ENCODE measurements at regions of chr1 and their contacts with region 1.

Region 1: GRCh38 chr1:185720633-185721272 is 13.4 kb upstream of the HMCN1 start:
- DNase-seq: peak; percentile 76
- H3K4me3 ChIP-seq: no peak overlapping the region
- H3K27ac ChIP-seq: no peak overlapping the region
- H3K4me1 ChIP-seq: peaks cover 3% of the 10 kb centered on the region
- H3K27me3 ChIP-seq: no peaks in the 10 kb centered on the region
- CTCF ChIP-seq: peak; percentile 31 to 32
- POLR2A ChIP-seq: no peak

Region 2: GRCh38 chr1:185541871-185542301 is 178.9 kb before region 1 on chr1:
- CTCF ChIA-PET with region 1: no interaction called
- POLR2A ChIA-PET with region 1: no interaction called
- dilution Hi-C with region 1: no loop called
- intact Hi-C with region 1: no loop called
- DNase-seq: no peak
- H3K4me3 ChIP-seq: no peak overlapping the region
- H3K27ac ChIP-seq: no peak overlapping the region
- H3K4me1 ChIP-seq: no peaks in the 10 kb centered on the region
- H3K27me3 ChIP-seq: no peaks in the 10 kb centered on the region
- CTCF ChIP-seq: no peak
- POLR2A ChIP-seq: no peak

Region 3: DNA sequence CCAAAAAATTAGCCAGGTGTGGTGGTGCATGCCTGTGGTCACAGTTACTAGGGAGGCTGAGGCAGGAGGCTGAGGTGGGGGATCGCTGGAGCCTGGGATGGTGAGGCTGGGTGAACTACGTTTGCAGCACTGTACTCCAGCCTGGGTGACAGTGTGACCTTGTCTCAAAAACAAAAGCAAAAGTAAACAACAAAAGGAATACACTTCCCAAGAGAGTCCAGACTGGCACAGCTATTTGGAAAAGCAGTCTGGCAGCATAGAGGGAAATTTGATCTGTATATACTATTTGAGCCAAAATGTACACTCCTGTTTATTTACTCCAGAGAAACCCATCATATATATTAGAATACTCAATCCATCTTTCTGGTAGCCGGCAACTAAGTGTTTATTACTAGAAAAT is 93.6 kb before region 1 on chr1:
- CTCF ChIA-PET with region 1: no interaction called
- POLR2A ChIA-PET with region 1: no interaction called
- dilution Hi-C with region 1: no loop called
- intact Hi-C with region 1: no loop called
- DNase-seq: no peak
- H3K4me3 ChIP-seq: no peak overlapping the region
- H3K27ac ChIP-seq: no peak overlapping the region
- H3K4me1 ChIP-seq: no peaks in the 10 kb centered on the region
- H3K27me3 ChIP-seq: no peaks in the 10 kb centered on the region
- CTCF ChIP-seq: no peak
- POLR2A ChIP-seq: no peak

Region 4: GRCh38 chr1:185652348-185652747 is 68.4 kb before region 1 on chr1:
- CTCF ChIA-PET with region 1: interaction called, 11 read pairs
- POLR2A ChIA-PET with region 1: no interaction called
- dilution Hi-C with region 1: no loop called
- intact Hi-C with region 1: no loop called
- DNase-seq: no peak
- H3K4me3 ChIP-seq: no peak overlapping the region
- H3K27ac ChIP-seq: no peak overlapping the region
- H3K4me1 ChIP-seq: peaks cover 2% of the 10 kb centered on the region
- H3K27me3 ChIP-seq: no peaks in the 10 kb centered on the region
- CTCF ChIP-seq: peak; percentile 12 to 17
- POLR2A ChIP-seq: no peak

Region 5: GRCh38 chr1:185813401-185813979 is 92.7 kb after region 1 on chr1:
- CTCF ChIA-PET with region 1: interaction called, 69 read pairs
- POLR2A ChIA-PET with region 1: no interaction called
- dilution Hi-C with region 1: no loop called
- intact Hi-C with region 1: loop called (anchors 2 kb)
- DNase-seq: peak; percentile 80
- H3K4me3 ChIP-seq: no peak overlapping the region
- H3K27ac ChIP-seq: no peak overlapping the region
- H3K4me1 ChIP-seq: no peaks in the 10 kb centered on the region
- H3K27me3 ChIP-seq: no peaks in the 10 kb centered on the region
- CTCF ChIP-seq: peak; percentile 26 to 40
- POLR2A ChIP-seq: no peak

Region 6: DNA sequence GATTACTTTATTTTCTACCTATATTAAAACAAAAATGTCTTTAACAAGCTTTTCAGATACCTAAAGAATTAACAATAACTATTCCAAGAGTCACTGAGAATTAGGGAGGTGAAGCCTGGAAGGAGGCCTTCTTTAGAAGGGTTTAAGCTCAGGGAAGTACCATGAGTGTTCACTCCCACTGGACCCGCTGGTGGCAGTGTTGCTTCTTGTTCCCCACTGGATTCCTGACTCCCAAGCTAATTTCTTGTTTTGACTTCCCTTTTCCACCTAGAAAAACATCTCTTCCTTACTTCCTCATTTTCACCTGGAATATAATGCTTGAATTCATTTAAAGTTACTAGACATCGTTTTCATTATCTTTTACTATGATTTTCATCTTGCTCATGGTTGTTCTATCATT is 277.6 kb after region 1 on chr1:
- CTCF ChIA-PET with region 1: interaction called, 14 read pairs
- POLR2A ChIA-PET with region 1: no interaction called
- dilution Hi-C with region 1: no loop called
- intact Hi-C with region 1: no loop called
- DNase-seq: no peak
- H3K4me3 ChIP-seq: no peak overlapping the region
- H3K27ac ChIP-seq: no peak overlapping the region
- H3K4me1 ChIP-seq: no peaks in the 10 kb centered on the region
- H3K27me3 ChIP-seq: no peaks in the 10 kb centered on the region
- CTCF ChIP-seq: no peak
- POLR2A ChIP-seq: no peak

Region 7: DNA sequence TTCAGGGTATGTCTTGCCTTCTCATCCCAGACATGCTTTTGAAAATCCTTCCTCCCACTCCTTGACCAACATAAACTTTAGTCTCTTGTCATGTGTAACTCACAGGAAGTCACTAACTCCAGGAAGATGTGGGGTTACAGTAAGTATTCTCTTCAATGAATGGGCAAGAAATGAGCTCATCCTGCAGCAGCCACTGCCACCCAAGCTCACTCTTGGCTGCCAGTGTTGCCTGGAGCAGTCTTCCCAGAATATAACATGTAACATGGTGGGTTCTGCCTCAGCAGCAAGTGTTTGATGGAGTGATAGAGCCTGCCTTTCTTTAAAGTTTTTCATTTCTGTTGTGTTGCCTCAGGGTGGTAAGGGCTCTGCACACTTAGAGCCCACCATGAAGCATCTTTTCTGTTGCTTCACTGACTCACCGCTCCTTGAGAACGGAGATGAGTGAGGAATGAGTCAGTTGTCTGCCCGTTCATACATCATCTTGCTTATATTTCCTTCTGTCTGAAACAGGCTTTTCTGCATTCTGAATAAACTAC is 467.3 kb after region 1 on chr1:
- CTCF ChIA-PET with region 1: interaction called, 15 read pairs
- POLR2A ChIA-PET with region 1: no interaction called
- dilution Hi-C with region 1: no loop called
- intact Hi-C with region 1: no loop called
- DNase-seq: peak; percentile 78
- H3K4me3 ChIP-seq: no peak overlapping the region
- H3K27ac ChIP-seq: peak overlapping the region; percentile 83
- H3K4me1 ChIP-seq: peaks cover 25% of the 10 kb centered on the region
- H3K27me3 ChIP-seq: no peaks in the 10 kb centered on the region
- CTCF ChIP-seq: no peak
- POLR2A ChIP-seq: no peak

Region 8: GRCh38 chr1:186325239-186325638 is 604.5 kb after region 1 on chr1:
- CTCF ChIA-PET with region 1: interaction called, 18 read pairs
- POLR2A ChIA-PET with region 1: no interaction called
- dilution Hi-C with region 1: no loop called
- intact Hi-C with region 1: no loop called
- DNase-seq: peak; percentile 31
- H3K4me3 ChIP-seq: no peak overlapping the region
- H3K27ac ChIP-seq: no peak overlapping the region
- H3K4me1 ChIP-seq: no peaks in the 10 kb centered on the region
- H3K27me3 ChIP-seq: no peaks in the 10 kb centered on the region
- CTCF ChIP-seq: peak; percentile 18 to 35
- POLR2A ChIP-seq: no peak

Measured in endothelial cell of umbilical vein (primary cell).